Activated T-helper 2 cell treated with anti-CD3 and anti-CD28 coated beads, Interferon-gamma antibody, Interleukin-2, Interleukin-4, amounts not matched to agents 10 μg/mL and 5 μg/mL and 100 μg/mL, durations not matched to agents 14 hours and 24 hours and 36 hours (primary cell): ENCODE measurements at regions of chr4 and their contacts with region 1.

Region 1: GRCh38 chr4:184649026-184649970 is at the starts of genes CASP3 and PRIMPOL:
- DNase-seq: peak; percentile 96
- H3K4me3 Mint-ChIP-seq: peak within 1 kb of the TSS; percentile 95
- H3K27ac Mint-ChIP-seq: peak within 1 kb of the TSS; percentile 88
- H3K4me1 Mint-ChIP-seq: peaks cover 52% of the 10 kb centered on the region
- H3K27me3 Mint-ChIP-seq: no peaks in the 10 kb centered on the region
- total RNA-seq, gene CASP3: 90.9 and 94.1 TPM in 2 replicates
- total RNA-seq, gene PRIMPOL: 16.2 and 17.6 TPM in 2 replicates

Region 2: DNA sequence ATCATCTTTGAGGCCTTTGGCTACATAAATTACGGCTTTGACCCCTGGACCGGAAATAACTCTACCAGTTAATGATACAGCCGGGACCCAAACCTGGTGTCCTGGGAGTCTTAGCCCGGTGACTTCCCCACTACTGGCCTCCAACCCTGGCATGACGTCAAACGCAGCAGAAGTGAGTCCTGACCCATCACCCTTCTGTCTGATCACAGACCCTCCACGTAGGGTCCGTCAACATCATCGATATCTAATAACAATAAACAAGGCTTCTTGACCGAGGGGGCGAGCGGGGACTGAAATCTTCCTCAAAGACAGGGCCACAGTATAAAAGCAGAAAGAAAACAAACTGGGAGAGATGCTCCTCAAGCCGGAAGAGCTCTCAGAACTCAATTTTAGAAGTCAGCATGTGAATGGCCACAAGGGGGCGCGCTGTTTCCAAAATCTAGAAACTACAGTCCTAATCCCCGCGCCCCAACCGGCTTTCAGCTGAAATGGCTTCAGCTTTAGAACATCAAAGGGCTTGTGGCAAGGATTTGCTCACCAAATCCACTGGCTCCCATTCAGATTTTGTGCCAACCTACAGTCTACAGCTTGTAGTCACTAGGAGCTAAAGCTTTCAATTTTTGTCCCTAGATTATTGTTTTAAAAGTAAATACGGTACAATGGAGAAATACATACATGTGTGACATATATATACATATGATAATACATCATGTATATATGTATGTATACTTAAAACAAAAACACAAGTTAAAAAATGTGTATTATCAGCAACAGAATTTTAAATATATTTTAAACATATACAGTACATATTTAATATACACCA is 385.2 kb before region 1 on chr4:
- intact Hi-C with region 1: loop called (anchors 1 kb)
- DNase-seq: peak; percentile 85
- H3K4me3 Mint-ChIP-seq: no peak overlapping the region
- H3K27ac Mint-ChIP-seq: peak overlapping the region; percentile 54
- H3K4me1 Mint-ChIP-seq: peaks cover 54% of the 10 kb centered on the region
- H3K27me3 Mint-ChIP-seq: no peaks in the 10 kb centered on the region

Region 3: GRCh38 chr4:184355111-184355604 is 294.1 kb before region 1 on chr4:
- intact Hi-C with region 1: loop called (anchors 5 kb)
- DNase-seq: no peak
- H3K4me3 Mint-ChIP-seq: no peak overlapping the region
- H3K27ac Mint-ChIP-seq: no peak overlapping the region
- H3K4me1 Mint-ChIP-seq: peaks cover 14% of the 10 kb centered on the region
- H3K27me3 Mint-ChIP-seq: no peaks in the 10 kb centered on the region

Region 4: GRCh38 chr4:184538023-184538599 is 111.2 kb before region 1 on chr4:
- intact Hi-C with region 1: loop called (anchors 1 kb)
- DNase-seq: peak; percentile 53
- H3K4me3 Mint-ChIP-seq: peak overlapping the region; percentile 85
- H3K27ac Mint-ChIP-seq: peak overlapping the region; percentile 87
- H3K4me1 Mint-ChIP-seq: peaks cover 61% of the 10 kb centered on the region
- H3K27me3 Mint-ChIP-seq: no peaks in the 10 kb centered on the region

Region 5: DNA sequence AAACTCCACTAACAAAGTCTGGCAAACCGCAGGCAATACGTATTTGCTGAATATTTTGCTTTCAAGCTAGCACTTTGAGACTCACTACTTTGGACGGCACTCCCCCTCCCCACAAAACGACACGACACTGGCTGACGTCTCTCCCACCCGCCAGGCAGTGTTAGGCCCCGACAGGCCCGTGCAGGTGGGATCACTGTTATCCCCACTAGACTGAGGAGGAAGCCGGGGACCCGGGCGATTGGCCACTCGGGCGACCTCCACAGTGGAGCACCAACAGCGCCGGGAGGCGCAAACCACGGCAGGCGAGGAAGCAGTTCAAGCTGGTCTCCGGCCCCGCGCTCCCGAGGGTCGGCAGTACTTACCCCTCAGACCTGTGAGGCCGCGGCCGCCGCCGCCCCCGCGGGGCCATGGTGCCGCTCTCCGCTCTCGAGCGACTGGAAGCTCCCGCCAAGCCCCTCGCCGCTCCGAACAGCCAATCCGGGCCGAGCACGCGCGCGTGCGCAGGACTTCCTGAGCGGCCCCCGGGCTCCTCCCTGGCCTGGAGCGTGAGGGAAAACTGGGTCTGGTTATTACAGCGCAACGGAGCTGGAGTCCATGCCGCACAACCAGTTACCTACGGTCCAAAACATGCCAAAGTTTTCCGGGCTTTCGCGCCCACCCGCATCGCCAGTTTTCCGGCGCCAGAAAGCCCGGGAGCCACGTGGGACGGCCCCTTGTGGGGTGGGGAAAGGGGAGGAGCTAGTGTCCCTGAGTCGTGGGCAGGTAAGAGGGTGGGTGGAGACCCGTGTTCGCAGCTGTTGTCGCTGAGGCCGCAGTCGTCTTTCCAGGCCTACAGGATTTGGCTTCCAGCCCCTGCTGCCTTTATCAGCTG is 84.6 kb after region 1 on chr4 and contains the start of gene CENPU:
- intact Hi-C with region 1: loop called (anchors 1 kb)
- DNase-seq: peak; percentile 96
- H3K4me3 Mint-ChIP-seq: peak within 1 kb of the TSS; percentile 93
- H3K27ac Mint-ChIP-seq: peak within 1 kb of the TSS; percentile 87
- H3K4me1 Mint-ChIP-seq: peaks cover 37% of the 10 kb centered on the region
- H3K27me3 Mint-ChIP-seq: no peaks in the 10 kb centered on the region
- total RNA-seq, gene CENPU: 60.9 and 74.2 TPM in 2 replicates